ENCODE measurements at regions of chr15 and their contacts with region 1.

Region 1: GRCh38 chr15:51067510-51067909 is 27.2 kb downstream of the TNFAIP8L3 start:
- DNase-seq: no peak
- ATAC-seq: no peak
- H3K4me3 ChIP-seq: no peak overlapping the region
- H3K27ac ChIP-seq: no peak overlapping the region
- H3K4me1 ChIP-seq: peaks cover 23% of the 10 kb centered on the region
- H3K27me3 ChIP-seq: no peaks in the 10 kb centered on the region
- CTCF ChIP-seq: no peak
- EP300 ChIP-seq: no peak
- POLR2A ChIP-seq: no peak
- RAD21 ChIP-seq: no peak

Region 2: GRCh38 chr15:51051776-51052175 is 15.7 kb before region 1 on chr15:
- CTCF ChIA-PET with region 1: interaction called, 9 read pairs
- POLR2A ChIA-PET with region 1: interaction called, 3 read pairs
- RAD21 ChIA-PET with region 1: interaction called, 4 read pairs
- SMC1A ChIA-PET with region 1: interaction called, 19 read pairs
- in situ Hi-C with region 1: no loop called
- intact Hi-C with region 1: no loop called
- DNase-seq: no peak
- ATAC-seq: no peak
- H3K4me3 ChIP-seq: no peak overlapping the region
- H3K27ac ChIP-seq: no peak overlapping the region
- H3K4me1 ChIP-seq: peaks cover 8% of the 10 kb centered on the region
- H3K27me3 ChIP-seq: no peaks in the 10 kb centered on the region
- CTCF ChIP-seq: no peak
- EP300 ChIP-seq: no peak
- POLR2A ChIP-seq: no peak
- RAD21 ChIP-seq: no peak

Region 3: GRCh38 chr15:51083641-51084166 is 16.2 kb after region 1 on chr15:
- CTCF ChIA-PET with region 1: interaction called, 3 read pairs
- POLR2A ChIA-PET with region 1: interaction called, 24 read pairs
- RAD21 ChIA-PET with region 1: interaction called, 6 read pairs
- SMC1A ChIA-PET with region 1: interaction called, 37 read pairs
- in situ Hi-C with region 1: no loop called
- intact Hi-C with region 1: no loop called
- DNase-seq: no peak
- ATAC-seq: no peak
- H3K4me3 ChIP-seq: no peak overlapping the region
- H3K27ac ChIP-seq: no peak overlapping the region
- H3K4me1 ChIP-seq: no peaks in the 10 kb centered on the region
- H3K27me3 ChIP-seq: no peaks in the 10 kb centered on the region
- CTCF ChIP-seq: no peak
- EP300 ChIP-seq: no peak
- POLR2A ChIP-seq: no peak
- RAD21 ChIP-seq: no peak

Measured in GM12878 (cell line).